Naive thymus-derived CD4-positive, alpha-beta T cell (primary cell): ENCODE measurements at regions of chr6 and their contacts with region 1.

Region 1: GRCh38 chr6:129730477-129731165 is 20.6 kb upstream of the ARHGAP18 start:
- DNase-seq: peak in 7 of 9 donors; percentile 22 to 62 (median 50)
- ATAC-seq: peak; percentile 66
- H3K4me3 ChIP-seq: no peak overlapping the region
- H3K4me3 Mint-ChIP-seq: no peak overlapping the region
- H3K27ac ChIP-seq: no peak overlapping the region
- H3K27ac Mint-ChIP-seq: peak overlapping the region in 4 of 9 donors; percentile 46 to 70 (median 50)
- H3K4me1 ChIP-seq: no peaks in the 10 kb centered on the region
- H3K4me1 Mint-ChIP-seq: peaks cover 0 to 13% (median 3%) of the 10 kb centered on the region in 7 donors
- H3K27me3 ChIP-seq: no peaks in the 10 kb centered on the region
- H3K27me3 Mint-ChIP-seq: no peaks in the 10 kb centered on the region

Region 2: GRCh38 chr6:127992144-127992543 is 1738.5 kb before region 1 on chr6:
- CTCF ChIA-PET with region 1: no interaction called
- POLR2A ChIA-PET with region 1: no interaction called
- intact Hi-C with region 1: no loop called
- DNase-seq: no peak
- ATAC-seq: no peak
- H3K4me3 ChIP-seq: no peak overlapping the region
- H3K4me3 Mint-ChIP-seq: no peak overlapping the region
- H3K27ac ChIP-seq: no peak overlapping the region
- H3K27ac Mint-ChIP-seq: no peak overlapping the region
- H3K4me1 ChIP-seq: peaks cover 0 to 3% of the 10 kb centered on the region in 2 donors
- H3K4me1 Mint-ChIP-seq: peaks cover 0 to 19% (median 15%) of the 10 kb centered on the region in 7 donors
- H3K27me3 ChIP-seq: no peaks in the 10 kb centered on the region
- H3K27me3 Mint-ChIP-seq: no peaks in the 10 kb centered on the region

Region 3: DNA sequence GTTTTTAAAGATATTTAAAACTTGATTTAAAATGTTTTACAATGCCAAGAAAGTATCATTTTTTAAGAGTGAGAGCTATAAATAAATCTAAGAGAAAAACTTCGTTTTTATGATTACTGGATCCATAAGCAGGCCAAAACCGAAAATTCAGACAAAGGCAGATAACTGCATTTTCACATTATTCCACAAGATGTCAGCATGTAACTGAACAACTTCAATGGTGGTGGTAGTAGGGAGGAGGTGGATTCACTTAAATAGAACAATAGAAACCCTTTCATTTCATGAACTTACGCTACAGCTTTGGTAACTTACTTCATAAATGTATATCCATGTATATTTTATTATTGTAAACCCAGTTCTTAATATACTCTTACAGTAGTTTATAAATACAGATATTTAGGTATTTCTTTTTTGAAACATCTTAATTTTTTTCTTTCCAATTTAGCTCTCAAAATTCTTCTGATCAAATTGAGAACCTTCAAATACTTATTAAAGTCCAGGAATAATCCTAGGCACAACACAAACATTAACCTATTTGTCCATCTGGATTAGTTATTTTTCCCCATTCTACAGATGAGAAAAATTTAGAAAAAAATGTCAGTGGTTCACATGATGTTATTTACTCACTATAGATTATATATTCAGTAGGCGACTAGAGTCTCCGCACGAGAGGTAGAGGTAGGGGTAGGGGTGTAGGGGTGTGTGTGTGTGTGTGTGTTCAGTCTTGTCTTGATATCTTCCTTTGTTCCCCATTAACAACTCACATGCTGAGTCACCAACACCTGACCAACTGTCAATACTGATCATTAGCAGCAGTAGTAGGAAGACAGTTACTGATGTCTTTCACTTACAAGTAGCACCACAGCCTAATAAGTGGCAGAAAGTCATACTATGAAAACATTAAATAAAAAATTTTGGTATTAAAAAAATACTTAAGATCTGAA is 132.1 kb before region 1 on chr6:
- CTCF ChIA-PET with region 1: interaction called, 114 read pairs
- POLR2A ChIA-PET with region 1: no interaction called
- intact Hi-C with region 1: loop called (anchors 1 kb)
- DNase-seq: peak in 7 of 9 donors; percentile 37 to 79 (median 70)
- ATAC-seq: peak; percentile 95
- H3K4me3 ChIP-seq: no peak overlapping the region
- H3K4me3 Mint-ChIP-seq: no peak overlapping the region
- H3K27ac ChIP-seq: no peak overlapping the region
- H3K27ac Mint-ChIP-seq: no peak overlapping the region
- H3K4me1 ChIP-seq: no peaks in the 10 kb centered on the region
- H3K4me1 Mint-ChIP-seq: peaks cover 0 to 2% (median 0%) of the 10 kb centered on the region in 7 donors
- H3K27me3 ChIP-seq: no peaks in the 10 kb centered on the region
- H3K27me3 Mint-ChIP-seq: peaks cover 0 to 3% (median 0%) of the 10 kb centered on the region in 5 donors

Region 4: DNA sequence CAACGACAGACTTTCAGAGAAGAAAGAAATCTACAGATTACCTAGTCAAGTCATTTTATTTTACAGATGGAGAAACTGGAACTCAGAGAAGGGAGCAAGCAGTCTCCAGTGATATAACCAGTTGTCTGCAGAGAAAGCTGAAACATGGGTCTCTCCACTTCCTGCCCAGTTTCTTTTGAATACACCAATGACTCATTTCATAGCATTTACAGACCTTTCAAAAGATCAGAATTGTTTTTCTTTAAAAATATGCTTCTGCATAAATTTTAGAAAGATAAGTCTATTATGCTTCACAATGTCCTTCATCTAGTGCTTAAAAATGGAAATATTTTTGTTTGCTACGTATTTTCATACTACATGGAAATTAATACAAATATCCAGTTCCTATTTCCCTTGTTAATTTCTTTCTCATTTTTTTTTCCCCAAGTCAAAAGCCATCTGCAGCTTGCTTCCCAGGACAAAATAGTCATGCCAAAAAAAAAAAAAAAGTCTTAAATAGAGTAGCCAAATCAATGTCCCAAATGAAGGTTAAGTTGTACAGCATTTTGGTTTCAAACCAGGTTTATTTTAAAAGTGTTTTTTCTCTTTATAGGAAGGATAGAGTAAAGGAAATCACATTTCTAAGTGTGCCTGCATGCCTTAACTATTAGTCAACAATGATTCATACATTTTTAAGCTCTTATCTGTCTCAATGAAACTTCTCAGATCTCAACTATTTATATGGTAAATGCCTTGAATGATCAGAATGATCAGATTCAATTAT is 57.6 kb before region 1 on chr6:
- CTCF ChIA-PET with region 1: interaction called, 6 read pairs
- POLR2A ChIA-PET with region 1: no interaction called
- intact Hi-C with region 1: loop called (anchors 1 kb)
- DNase-seq: peak in 2 of 9 donors; percentile 7 to 26
- ATAC-seq: peak; percentile 35
- H3K4me3 ChIP-seq: no peak overlapping the region
- H3K4me3 Mint-ChIP-seq: peak overlapping the region in 9 of 10 donors; percentile 69 to 88 (median 85)
- H3K27ac ChIP-seq: peak overlapping the region; percentile 34
- H3K27ac Mint-ChIP-seq: peak overlapping the region in 8 of 9 donors; percentile 40 to 95 (median 85)
- H3K4me1 ChIP-seq: peaks cover 16 to 22% of the 10 kb centered on the region in 2 donors
- H3K4me1 Mint-ChIP-seq: peaks cover 18 to 57% (median 25%) of the 10 kb centered on the region in 7 donors
- H3K27me3 ChIP-seq: no peaks in the 10 kb centered on the region
- H3K27me3 Mint-ChIP-seq: no peaks in the 10 kb centered on the region

Region 5: GRCh38 chr6:129719692-129720091 is 10.9 kb before region 1 on chr6:
- CTCF ChIA-PET with region 1: interaction called, 10 read pairs
- POLR2A ChIA-PET with region 1: no interaction called
- intact Hi-C with region 1: no loop called
- DNase-seq: no peak
- ATAC-seq: no peak
- H3K4me3 ChIP-seq: no peak overlapping the region
- H3K4me3 Mint-ChIP-seq: no peak overlapping the region
- H3K27ac ChIP-seq: no peak overlapping the region
- H3K27ac Mint-ChIP-seq: peak overlapping the region in 1 of 9 donors; percentile 20
- H3K4me1 ChIP-seq: no peaks in the 10 kb centered on the region
- H3K4me1 Mint-ChIP-seq: peaks cover 0 to 10% (median 5%) of the 10 kb centered on the region in 7 donors
- H3K27me3 ChIP-seq: no peaks in the 10 kb centered on the region
- H3K27me3 Mint-ChIP-seq: peaks cover 0 to 3% (median 0%) of the 10 kb centered on the region in 5 donors

Region 6: GRCh38 chr6:129774697-129775447 is 44.3 kb after region 1 on chr6:
- CTCF ChIA-PET with region 1: no interaction called
- POLR2A ChIA-PET with region 1: no interaction called
- intact Hi-C with region 1: no loop called
- DNase-seq: peak in 7 of 9 donors; percentile 4 to 35 (median 24)
- ATAC-seq: peak; percentile 63
- H3K4me3 ChIP-seq: no peak overlapping the region
- H3K4me3 Mint-ChIP-seq: no peak overlapping the region
- H3K27ac ChIP-seq: no peak overlapping the region
- H3K27ac Mint-ChIP-seq: no peak overlapping the region
- H3K4me1 ChIP-seq: no peaks in the 10 kb centered on the region
- H3K4me1 Mint-ChIP-seq: peaks cover 0 to 5% (median 3%) of the 10 kb centered on the region in 7 donors
- H3K27me3 ChIP-seq: no peaks in the 10 kb centered on the region
- H3K27me3 Mint-ChIP-seq: peaks cover 0 to 39% (median 0%) of the 10 kb centered on the region in 5 donors

Region 7: GRCh38 chr6:129801909-129802308 is 71.3 kb after region 1 on chr6:
- CTCF ChIA-PET with region 1: no interaction called
- POLR2A ChIA-PET with region 1: no interaction called
- intact Hi-C with region 1: no loop called
- DNase-seq: no peak
- ATAC-seq: no peak
- H3K4me3 ChIP-seq: no peak overlapping the region
- H3K4me3 Mint-ChIP-seq: no peak overlapping the region
- H3K27ac ChIP-seq: no peak overlapping the region
- H3K27ac Mint-ChIP-seq: no peak overlapping the region
- H3K4me1 ChIP-seq: no peaks in the 10 kb centered on the region
- H3K4me1 Mint-ChIP-seq: no peaks in the 10 kb centered on the region
- H3K27me3 ChIP-seq: no peaks in the 10 kb centered on the region
- H3K27me3 Mint-ChIP-seq: peaks cover 0 to 31% (median 12%) of the 10 kb centered on the region in 5 donors